ENCODE measurements at regions of chr7 and their contacts with region 1.

Region 1: DNA sequence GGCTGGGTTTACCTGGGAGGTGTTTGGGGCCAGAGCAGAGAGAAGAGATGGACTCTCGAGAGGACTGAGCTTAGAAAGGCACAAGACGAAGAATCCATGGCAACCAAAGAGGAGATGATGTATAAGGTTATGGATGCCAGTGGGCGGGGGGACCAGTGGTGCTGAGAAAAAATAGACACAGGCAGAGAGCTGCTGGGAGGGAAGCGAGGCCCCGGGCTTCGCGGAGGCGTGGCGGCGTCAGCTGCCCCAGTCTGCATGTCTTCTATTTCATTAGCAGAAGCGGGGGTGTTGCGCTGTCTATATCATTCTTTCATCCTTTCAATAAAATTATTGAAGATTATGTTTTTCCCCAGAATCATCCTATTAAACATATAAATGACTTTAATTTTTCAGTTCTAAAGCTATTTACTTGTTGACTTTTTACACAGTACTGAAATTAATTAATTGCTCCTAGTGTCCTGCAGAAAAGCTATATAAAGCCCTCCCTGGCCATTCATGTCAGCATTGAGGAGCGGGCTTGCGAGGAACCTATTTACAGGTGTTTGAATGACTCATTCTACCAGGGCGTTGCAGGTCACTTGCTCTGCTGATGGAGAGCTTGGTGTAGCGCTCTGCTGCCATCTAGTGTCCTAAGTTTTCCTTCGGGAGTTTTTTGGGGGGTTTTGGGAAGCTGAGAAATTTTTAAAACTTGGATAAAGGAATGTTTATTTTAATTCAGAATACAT is 42.9 kb upstream of the BHLHA15 start:
- DNase-seq: peak in 31 of 35 experiments; percentile 16 to 87 (median 46)
- ATAC-seq: peak; percentile 79 to 87 (median 84)
- H3K4me3 ChIP-seq: no peak overlapping the region
- H3K4me3 Mint-ChIP-seq: no peak overlapping the region
- H3K27ac ChIP-seq: no peak overlapping the region
- H3K27ac Mint-ChIP-seq: no peak overlapping the region
- H3K4me1 ChIP-seq: peaks cover 0 to 2% of the 10 kb centered on the region in 2 experiments
- H3K4me1 Mint-ChIP-seq: peaks cover 15 to 18% (median 17%) of the 10 kb centered on the region in 3 donors
- H3K27me3 ChIP-seq: no peaks in the 10 kb centered on the region
- H3K27me3 Mint-ChIP-seq: no peaks in the 10 kb centered on the region

Region 2: DNA sequence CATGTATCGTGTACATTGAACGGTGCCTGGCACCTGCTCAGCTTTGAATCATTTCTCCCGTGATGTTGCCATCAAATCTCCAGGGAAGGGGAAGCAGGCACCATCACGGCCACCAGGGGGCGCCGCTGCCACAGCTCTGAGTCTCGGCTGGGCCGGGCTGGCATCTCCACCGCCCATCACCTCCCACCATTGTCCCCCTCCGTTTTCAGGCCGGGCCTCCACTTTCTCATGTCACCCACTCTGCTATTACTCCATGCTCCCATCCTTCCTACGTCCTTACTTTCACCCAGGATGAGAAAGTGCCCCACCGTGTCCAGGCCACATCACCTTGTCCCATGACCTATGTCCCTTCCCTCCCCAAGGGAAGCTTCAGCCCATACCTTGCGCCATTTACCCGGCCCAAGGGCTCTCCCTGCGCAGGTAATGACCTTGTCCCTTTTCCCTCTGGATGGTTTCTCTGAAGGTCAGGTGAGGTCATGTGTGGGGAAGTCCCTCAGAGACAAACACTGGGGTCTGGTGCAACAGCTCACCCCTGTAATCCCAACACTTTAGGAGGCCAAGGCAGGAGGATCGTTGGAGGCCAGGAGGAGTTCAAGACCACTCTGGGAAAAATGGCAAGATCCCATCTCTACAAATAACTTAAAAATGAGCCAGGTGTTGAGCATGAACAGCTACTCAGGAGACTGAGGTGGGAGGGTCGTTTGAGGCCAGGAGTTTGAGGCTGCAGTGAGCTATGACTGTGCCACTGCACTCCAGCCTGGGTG is 146.6 kb before region 1 on chr7:
- CTCF ChIA-PET with region 1: interaction called, 49 to 82 read pairs
- POLR2A ChIA-PET with region 1: no interaction called
- DNase-seq: peak; percentile 30 to 86 (median 70)
- ATAC-seq: peak; percentile 73 to 82 (median 81)
- H3K4me3 ChIP-seq: no peak overlapping the region
- H3K4me3 Mint-ChIP-seq: no peak overlapping the region
- H3K27ac ChIP-seq: no peak overlapping the region
- H3K27ac Mint-ChIP-seq: no peak overlapping the region
- H3K4me1 ChIP-seq: peaks cover 0 to 5% of the 10 kb centered on the region in 2 experiments
- H3K4me1 Mint-ChIP-seq: peaks cover 0 to 4% (median 3%) of the 10 kb centered on the region in 3 donors
- H3K27me3 ChIP-seq: peaks cover 0 to 33% of the 10 kb centered on the region in 2 experiments
- H3K27me3 Mint-ChIP-seq: peaks cover 3 to 16% of the 10 kb centered on the region in 2 donors

Region 3: DNA sequence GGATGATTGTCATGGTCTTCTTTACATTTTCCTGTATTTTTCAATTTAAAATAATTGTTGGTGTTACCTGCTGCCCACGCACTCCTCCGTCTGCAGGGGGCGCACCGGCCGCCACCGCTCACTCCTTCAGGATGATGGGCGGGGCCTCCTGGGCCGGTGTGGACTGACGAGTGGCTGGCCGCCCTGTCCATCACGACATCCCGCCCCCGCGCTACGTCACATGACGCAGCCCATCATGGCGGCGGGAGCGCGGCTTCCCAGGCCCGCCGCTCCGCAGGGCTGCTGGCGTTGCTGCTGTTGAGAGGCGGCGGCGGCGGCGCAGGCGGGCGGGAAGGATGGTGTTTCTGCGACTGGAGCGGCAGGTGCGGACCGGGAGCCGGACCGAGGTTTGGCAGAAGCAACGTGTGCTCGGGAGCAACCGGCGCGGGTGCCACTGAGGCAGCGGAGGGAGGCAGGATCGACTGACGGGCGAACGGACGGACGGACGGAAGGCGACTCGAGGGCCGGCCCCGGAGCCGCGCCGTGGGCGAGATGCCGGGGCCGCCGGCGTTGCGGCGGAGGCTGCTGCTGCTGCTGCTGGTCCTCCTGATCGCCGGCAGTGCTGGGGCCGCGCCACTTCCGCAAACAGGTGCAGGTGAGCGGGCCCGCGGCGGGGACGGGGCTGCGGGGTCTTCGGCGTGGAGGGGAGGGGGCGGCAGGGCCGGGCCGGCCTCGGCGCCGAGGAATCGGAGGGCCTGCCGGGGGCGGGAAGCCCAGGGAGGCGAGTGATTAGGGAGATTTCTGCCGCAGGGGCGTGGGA is 61.5 kb before region 1 on chr7 and contains the start of gene LMTK2:
- CTCF ChIA-PET with region 1: interaction called, 14 to 29 read pairs
- POLR2A ChIA-PET with region 1: interaction called in 1 of 2 experiments, 3 read pairs
- DNase-seq: peak; percentile 81 to 99 (median 94)
- ATAC-seq: peak; percentile 99 to 100 (median 100)
- H3K4me3 ChIP-seq: peak within 1 kb of the TSS; percentile 75 to 77
- H3K4me3 Mint-ChIP-seq: peak within 1 kb of the TSS; percentile 94 to 97 (median 95)
- H3K27ac ChIP-seq: peak within 1 kb of the TSS; percentile 55
- H3K27ac Mint-ChIP-seq: peak within 1 kb of the TSS; percentile 79 to 92
- H3K4me1 ChIP-seq: peaks cover 10 to 18% of the 10 kb centered on the region in 2 experiments
- H3K4me1 Mint-ChIP-seq: peaks cover 49 to 52% (median 50%) of the 10 kb centered on the region in 3 donors
- H3K27me3 ChIP-seq: peaks cover 0 to 15% of the 10 kb centered on the region in 2 experiments
- H3K27me3 Mint-ChIP-seq: peaks cover 4 to 17% of the 10 kb centered on the region in 2 donors
- total RNA-seq, gene LMTK2: 15.4 to 26.8 (median 23.4) TPM

Region 4: DNA sequence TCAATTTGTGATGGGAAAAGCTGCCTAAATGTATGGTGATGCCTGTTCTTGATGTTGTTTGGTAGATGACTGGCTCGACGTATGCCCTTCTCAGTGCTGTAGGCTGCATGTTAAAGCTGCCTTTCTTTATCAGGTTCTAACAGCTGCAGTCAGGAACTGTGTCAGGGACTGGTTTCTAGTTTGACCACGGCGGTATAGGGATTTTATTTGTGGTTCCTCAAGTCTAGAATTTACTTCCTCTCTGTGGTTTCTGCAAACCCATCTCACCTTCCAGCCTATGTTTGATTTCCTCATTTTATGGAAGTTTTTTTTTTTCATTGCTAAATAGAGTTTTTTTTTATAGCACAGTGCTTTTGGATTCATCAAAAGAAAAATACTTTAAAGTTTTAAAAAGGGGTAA is 35.2 kb before region 1 on chr7:
- CTCF ChIA-PET with region 1: interaction called in 1 of 2 experiments, 12 read pairs
- POLR2A ChIA-PET with region 1: no interaction called
- DNase-seq: peak in 16 of 35 experiments; percentile 2 to 56 (median 12)
- ATAC-seq: peak; percentile 41 to 77 (median 56)
- H3K4me3 ChIP-seq: no peak overlapping the region
- H3K4me3 Mint-ChIP-seq: peak overlapping the region; percentile 17 to 50 (median 25)
- H3K27ac ChIP-seq: no peak overlapping the region
- H3K27ac Mint-ChIP-seq: no peak overlapping the region
- H3K4me1 ChIP-seq: peaks cover 25 to 26% of the 10 kb centered on the region in 2 experiments
- H3K4me1 Mint-ChIP-seq: peaks cover 58 to 65% (median 61%) of the 10 kb centered on the region in 3 donors
- H3K27me3 ChIP-seq: peaks cover 0 to 3% of the 10 kb centered on the region in 2 experiments
- H3K27me3 Mint-ChIP-seq: no peaks in the 10 kb centered on the region

Region 5: DNA sequence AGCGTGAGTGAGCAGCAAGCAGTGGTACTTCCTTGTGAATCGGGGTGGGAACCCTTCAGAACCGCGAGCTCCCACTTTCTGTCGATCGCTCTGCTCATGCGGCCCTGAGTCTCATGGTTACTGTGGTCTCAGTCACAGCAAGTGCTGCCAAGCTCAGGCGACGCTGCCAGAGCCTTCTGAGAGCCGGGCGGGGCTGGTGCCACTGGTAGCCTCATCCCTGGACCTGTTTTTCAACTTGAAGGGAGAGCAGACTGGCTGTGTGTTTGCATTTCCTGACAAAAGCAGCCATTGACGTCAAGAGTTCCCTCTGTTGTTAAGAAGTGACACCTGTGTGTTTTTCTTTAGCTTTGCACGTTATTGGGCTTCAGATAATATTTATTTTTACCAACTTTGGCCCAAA is 10.0 kb after region 1 on chr7:
- CTCF ChIA-PET with region 1: interaction called, 3 to 15 read pairs
- POLR2A ChIA-PET with region 1: no interaction called
- DNase-seq: no peak
- ATAC-seq: no peak
- H3K4me3 ChIP-seq: no peak overlapping the region
- H3K4me3 Mint-ChIP-seq: no peak overlapping the region
- H3K27ac ChIP-seq: no peak overlapping the region
- H3K27ac Mint-ChIP-seq: no peak overlapping the region
- H3K4me1 ChIP-seq: no peaks in the 10 kb centered on the region
- H3K4me1 Mint-ChIP-seq: no peaks in the 10 kb centered on the region
- H3K27me3 ChIP-seq: no peaks in the 10 kb centered on the region
- H3K27me3 Mint-ChIP-seq: no peaks in the 10 kb centered on the region

Region 6: DNA sequence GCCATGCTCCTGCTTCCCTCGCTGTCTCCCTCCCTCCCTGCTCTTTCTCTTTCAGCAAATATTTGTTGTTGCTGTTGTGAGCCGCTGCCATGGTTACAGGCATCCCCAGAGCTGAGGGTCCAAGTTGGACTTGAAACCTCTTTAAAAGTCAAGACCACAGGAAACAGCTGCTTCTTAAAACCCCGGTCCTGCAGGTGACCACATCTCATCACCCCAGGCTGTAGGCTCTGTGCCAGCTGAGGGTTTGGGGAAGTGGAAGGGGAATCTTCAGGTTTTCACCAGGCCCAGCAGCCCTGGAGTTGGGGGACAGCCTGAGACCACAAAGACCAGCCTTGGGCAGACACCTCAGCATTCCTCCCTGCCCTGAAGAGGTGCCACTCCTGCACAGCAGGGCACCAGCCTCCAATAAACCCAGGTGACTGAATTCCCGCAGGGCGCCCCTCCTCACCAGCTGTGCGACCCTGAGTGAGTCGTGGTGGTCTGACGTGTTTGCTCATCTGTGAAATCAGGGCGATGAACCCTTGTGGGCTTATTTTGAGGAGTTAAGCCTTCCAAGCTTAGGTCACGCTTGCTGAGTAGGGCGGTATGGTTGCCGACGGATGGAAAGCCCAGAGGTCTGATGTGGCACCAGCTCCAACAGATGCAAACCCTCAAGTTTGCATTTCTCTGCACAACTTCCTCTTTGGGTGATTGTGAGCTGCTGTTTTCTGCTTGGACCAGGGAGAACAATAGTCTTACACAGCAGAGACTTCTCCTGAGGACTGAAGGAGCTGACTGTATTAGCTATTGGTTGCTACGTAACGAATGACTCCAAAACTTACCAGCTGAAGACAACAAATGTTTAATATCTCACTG is 473.5 kb after region 1 on chr7:
- CTCF ChIA-PET with region 1: no interaction called
- POLR2A ChIA-PET with region 1: no interaction called
- DNase-seq: peak in 3 of 35 experiments; percentile 3 to 14 (median 10)
- ATAC-seq: peak in 2 of 4 experiments; percentile 20 to 31
- H3K4me3 ChIP-seq: no peak overlapping the region
- H3K4me3 Mint-ChIP-seq: no peak overlapping the region
- H3K27ac ChIP-seq: no peak overlapping the region
- H3K27ac Mint-ChIP-seq: no peak overlapping the region
- H3K4me1 ChIP-seq: no peaks in the 10 kb centered on the region
- H3K4me1 Mint-ChIP-seq: no peaks in the 10 kb centered on the region
- H3K27me3 ChIP-seq: peaks cover 0 to 16% of the 10 kb centered on the region in 2 experiments
- H3K27me3 Mint-ChIP-seq: no peaks in the 10 kb centered on the region

Region 7: GRCh38 chr7:98902523-98902922 is 734.2 kb after region 1 on chr7:
- CTCF ChIA-PET with region 1: no interaction called
- POLR2A ChIA-PET with region 1: no interaction called
- DNase-seq: no peak
- ATAC-seq: no peak
- H3K4me3 ChIP-seq: no peak overlapping the region
- H3K4me3 Mint-ChIP-seq: no peak overlapping the region
- H3K27ac ChIP-seq: no peak overlapping the region
- H3K27ac Mint-ChIP-seq: no peak overlapping the region
- H3K4me1 ChIP-seq: no peaks in the 10 kb centered on the region
- H3K4me1 Mint-ChIP-seq: peaks cover 0 to 6% (median 0%) of the 10 kb centered on the region in 3 donors
- H3K27me3 ChIP-seq: no peaks in the 10 kb centered on the region
- H3K27me3 Mint-ChIP-seq: no peaks in the 10 kb centered on the region

Measured in T-cell (primary cell).